CD4-positive, alpha-beta memory T cell (primary cell): ENCODE measurements at regions of chr17 and their contacts with region 1.

Region 1: DNA sequence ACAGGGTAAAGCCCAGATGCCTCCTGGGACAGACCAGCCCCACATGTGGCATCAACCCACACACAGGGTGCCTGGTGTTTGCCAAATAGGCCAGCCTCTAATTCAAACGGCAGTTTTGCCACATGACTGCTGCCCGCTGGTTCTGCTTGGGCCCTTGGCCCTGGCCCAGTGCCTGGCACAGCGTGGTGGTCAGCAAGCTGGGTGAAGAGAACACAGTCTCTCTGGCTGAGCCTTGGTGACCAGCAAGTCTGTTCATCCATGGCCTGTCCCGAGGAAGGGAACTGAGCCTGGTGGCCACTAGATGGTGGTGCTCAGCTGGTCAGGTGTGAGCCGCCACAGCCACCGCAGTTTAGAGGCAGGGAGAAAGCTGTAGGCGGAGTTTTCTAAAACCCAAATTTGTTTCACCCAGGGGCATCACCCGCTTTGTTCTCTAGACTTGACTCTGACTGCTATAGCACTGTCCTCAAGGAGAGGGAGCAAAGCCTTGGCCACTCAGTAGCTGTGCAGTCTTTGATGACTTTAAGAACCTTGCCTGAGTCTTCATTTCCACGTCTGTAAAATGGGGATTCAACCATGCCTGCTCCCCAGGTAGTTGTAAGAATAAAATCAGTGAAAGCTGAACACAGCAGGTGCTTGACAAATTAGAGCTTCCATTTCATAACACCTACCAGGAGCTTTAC is 4.7 kb upstream of the GFAP start:
- DNase-seq: peak in 4 of 5 donors; percentile 45 to 50 (median 48)
- H3K4me3 ChIP-seq: no peak overlapping the region
- H3K4me3 Mint-ChIP-seq: no peak overlapping the region
- H3K27ac ChIP-seq: no peak overlapping the region
- H3K27ac Mint-ChIP-seq: no peak overlapping the region
- H3K4me1 ChIP-seq: no peaks in the 10 kb centered on the region
- H3K4me1 Mint-ChIP-seq: peaks cover 0 to 3% (median 0%) of the 10 kb centered on the region in 4 donors
- H3K27me3 ChIP-seq: no peaks in the 10 kb centered on the region
- H3K27me3 Mint-ChIP-seq: peaks cover 4 to 6% of the 10 kb centered on the region in 2 donors

Region 2: DNA sequence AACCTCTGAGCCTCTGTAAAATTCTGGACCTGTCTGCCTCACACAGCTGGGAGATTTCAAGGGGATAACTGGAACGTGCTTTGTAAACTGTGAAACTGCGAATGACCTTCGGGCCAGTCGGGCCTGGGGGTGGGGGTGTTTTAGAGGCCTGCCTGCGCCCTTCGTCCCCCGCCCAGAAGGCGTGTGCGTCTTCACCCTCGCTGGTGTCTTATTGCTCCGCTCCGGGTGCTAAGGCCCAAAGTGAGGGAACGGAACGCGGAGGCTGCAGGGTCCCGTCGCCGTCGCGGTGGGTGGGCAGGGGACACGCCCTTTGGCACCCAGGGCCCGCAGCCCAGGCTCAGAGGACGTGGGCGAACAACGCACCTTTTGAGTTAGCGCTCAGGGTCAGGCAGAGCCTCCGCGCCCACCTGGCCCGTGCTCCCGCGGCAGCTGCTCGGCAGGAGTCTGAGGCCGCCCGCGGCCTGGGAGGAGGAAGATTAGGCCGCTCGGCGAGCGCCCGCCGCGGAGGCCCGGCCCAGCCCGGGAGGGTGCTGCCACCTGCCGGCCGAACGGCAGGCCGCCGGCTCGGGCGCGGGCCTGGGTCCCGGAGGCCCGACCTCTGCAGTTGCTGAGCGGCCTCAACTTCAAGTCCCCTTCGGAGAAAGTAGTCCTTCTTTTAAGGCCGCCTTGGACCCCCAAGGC is 101.7 kb after region 1 on chr17:
- CTCF ChIA-PET with region 1: interaction called, 76 read pairs
- POLR2A ChIA-PET with region 1: interaction called, 6 read pairs
- intact Hi-C with region 1: loop called (anchors 1 kb)
- DNase-seq: peak; percentile 50 to 66 (median 55)
- H3K4me3 ChIP-seq: peak overlapping the region in 1 of 2 donors; percentile 47
- H3K4me3 Mint-ChIP-seq: peak overlapping the region in 7 of 8 donors; percentile 35 to 84 (median 69)
- H3K27ac ChIP-seq: no peak overlapping the region
- H3K27ac Mint-ChIP-seq: peak overlapping the region in 3 of 7 donors; percentile 7 to 39 (median 24)
- H3K4me1 ChIP-seq: peaks cover 25% of the 10 kb centered on the region
- H3K4me1 Mint-ChIP-seq: peaks cover 11 to 22% (median 18%) of the 10 kb centered on the region in 4 donors
- H3K27me3 ChIP-seq: peaks cover 20% of the 10 kb centered on the region
- H3K27me3 Mint-ChIP-seq: peaks cover 26 to 31% of the 10 kb centered on the region in 2 donors